Naive thymus-derived CD4-positive, alpha-beta T cell (primary cell): ENCODE measurements at regions of chr1 and their contacts with region 1.

Region 1: DNA sequence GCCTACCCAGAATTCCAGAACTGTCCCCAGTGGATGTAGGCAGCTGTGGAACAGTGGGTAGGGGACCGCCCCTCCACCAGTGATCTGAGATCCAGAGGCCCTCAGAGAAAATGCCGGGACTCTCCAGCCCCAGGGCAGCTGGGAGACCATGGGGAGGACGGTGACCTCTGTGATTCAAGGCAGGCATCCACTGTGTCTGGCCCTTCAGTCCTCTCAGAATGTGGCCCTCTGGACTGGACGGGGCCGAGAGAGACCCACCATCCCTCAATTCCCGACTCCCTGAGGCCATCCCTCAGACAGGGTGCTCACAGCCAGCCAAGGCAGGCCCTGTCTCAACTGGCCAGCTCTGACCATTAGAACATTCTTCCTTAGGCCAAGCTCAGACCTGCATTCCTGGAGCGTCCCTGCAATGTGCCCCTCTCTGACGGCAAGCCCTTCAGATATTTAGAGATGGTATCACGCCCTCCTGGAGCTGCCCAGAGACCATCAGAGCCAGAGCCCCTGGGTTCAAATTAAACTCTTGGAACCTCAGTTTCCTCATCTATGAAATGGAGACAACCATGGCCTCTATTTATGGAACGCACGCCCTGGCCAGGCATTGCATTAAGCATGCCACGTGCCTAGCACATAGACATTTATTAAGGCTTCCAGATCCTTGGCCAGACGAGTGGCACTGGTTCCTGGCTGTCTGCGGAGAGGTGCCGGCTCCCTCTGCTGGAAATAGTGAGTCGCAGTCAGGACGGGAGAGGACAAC is 9.6 kb upstream of the EPS8L3 start:
- DNase-seq: peak; percentile 34 to 79 (median 69)
- ATAC-seq: peak; percentile 87
- H3K4me3 ChIP-seq: no peak overlapping the region
- H3K4me3 Mint-ChIP-seq: no peak overlapping the region
- H3K27ac ChIP-seq: no peak overlapping the region
- H3K27ac Mint-ChIP-seq: peak overlapping the region in 1 of 9 donors; percentile 73
- H3K4me1 ChIP-seq: peaks cover 0 to 4% of the 10 kb centered on the region in 2 donors
- H3K4me1 Mint-ChIP-seq: peaks cover 0 to 21% (median 6%) of the 10 kb centered on the region in 7 donors
- H3K27me3 ChIP-seq: no peaks in the 10 kb centered on the region
- H3K27me3 Mint-ChIP-seq: peaks cover 0 to 12% (median 5%) of the 10 kb centered on the region in 5 donors

Region 2: DNA sequence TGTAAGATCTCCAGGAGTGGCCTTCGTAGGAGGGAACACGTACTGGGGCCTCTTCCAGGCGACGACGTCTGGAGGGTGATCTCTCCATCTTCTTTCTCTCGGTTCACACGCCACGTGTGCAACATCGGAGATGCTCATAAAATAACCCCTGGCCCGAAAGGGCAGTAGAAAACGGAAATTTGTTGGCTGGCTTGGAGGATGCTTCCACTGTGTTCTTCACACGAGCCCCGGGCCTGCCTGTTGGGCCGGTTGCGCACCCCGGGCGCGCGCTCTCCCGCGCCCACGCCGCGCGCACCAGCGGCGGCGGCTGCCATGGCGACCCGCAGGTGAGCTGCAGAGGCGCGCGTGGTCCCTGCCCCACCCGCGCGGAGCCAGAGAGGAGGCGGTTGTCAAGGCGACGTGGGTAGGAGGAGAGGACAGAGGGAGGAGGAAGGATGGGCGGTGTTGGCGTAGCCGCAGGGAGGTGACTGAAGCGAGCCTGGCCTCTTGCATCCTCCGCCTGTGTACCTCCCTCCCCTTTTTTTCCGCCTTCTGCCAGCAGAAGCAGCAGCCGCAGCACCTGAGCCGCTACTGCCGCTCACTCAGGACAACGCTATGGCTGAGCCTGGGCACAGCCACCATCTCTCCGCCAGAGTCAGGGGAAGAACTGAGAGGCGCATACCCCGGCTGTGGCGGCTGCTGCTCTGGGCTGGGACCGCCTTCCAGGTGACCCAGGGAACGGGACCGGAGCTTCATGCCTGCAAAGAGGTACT is 659.6 kb before region 1 on chr1 and contains the start of gene ELAPOR1:
- CTCF ChIA-PET with region 1: no interaction called
- POLR2A ChIA-PET with region 1: no interaction called
- intact Hi-C with region 1: no loop called
- DNase-seq: peak; percentile 73 to 93 (median 85)
- ATAC-seq: peak; percentile 92
- H3K4me3 ChIP-seq: peak within 1 kb of the TSS; percentile 68
- H3K4me3 Mint-ChIP-seq: peak within 1 kb of the TSS; percentile 84 to 93 (median 88)
- H3K27ac ChIP-seq: peak within 1 kb of the TSS; percentile 42
- H3K27ac Mint-ChIP-seq: peak within 1 kb of the TSS; percentile 84 to 96 (median 92)
- H3K4me1 ChIP-seq: peaks cover 16 to 21% of the 10 kb centered on the region in 2 donors
- H3K4me1 Mint-ChIP-seq: peaks cover 24 to 40% (median 30%) of the 10 kb centered on the region in 7 donors
- H3K27me3 ChIP-seq: no peaks in the 10 kb centered on the region
- H3K27me3 Mint-ChIP-seq: peaks cover 0 to 37% (median 0%) of the 10 kb centered on the region in 5 donors
- total RNA-seq, gene ELAPOR1: 4.4 to 12.3 (median 6.7) TPM

Region 3: DNA sequence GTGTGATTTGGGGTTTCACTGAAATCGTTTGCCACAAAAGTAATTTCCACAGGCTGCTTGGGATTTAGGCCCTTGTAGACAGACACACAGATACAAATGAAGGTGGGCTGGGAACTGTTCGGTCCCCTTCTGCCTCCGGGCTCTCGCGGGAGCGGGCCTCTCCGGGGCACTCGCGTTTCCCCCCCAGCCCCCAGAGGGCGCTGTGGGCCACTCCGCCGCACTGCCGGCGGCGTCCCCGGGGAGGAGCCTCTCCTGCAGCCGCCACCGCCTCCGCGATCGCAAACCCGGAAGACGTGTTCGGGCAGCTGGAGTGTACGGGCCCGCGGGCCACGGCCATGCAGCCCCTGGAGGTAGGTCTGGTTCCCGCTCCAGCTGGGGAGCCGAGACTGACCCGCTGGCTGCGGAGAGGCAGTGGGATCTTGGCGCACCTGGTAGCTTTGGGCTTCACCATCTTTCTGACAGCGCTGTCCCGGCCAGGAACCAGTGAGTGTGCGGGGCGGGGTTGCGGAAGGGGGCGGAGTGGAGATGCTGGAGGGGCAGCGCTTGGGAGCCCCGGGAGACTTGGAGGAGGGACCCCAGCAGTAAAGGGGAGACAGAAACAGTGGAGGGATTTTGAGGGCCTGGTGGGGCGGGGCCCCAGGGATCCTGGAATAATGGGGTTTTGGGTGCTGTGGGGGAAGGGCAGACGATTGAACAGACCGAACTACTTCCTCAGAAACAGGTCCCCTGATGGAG is 279.4 kb before region 1 on chr1 and contains the start of gene CYB561D1:
- CTCF ChIA-PET with region 1: no interaction called
- POLR2A ChIA-PET with region 1: no interaction called
- intact Hi-C with region 1: loop called in 1 of 2 experiments (anchors 1 kb)
- DNase-seq: peak; percentile 83 to 97 (median 91)
- ATAC-seq: peak; percentile 96
- H3K4me3 ChIP-seq: peak within 1 kb of the TSS; percentile 96
- H3K4me3 Mint-ChIP-seq: peak within 1 kb of the TSS; percentile 90 to 98 (median 94)
- H3K27ac ChIP-seq: peak within 1 kb of the TSS; percentile 72
- H3K27ac Mint-ChIP-seq: peak within 1 kb of the TSS; percentile 84 to 98 (median 92)
- H3K4me1 ChIP-seq: peaks cover 31 to 59% of the 10 kb centered on the region in 2 donors
- H3K4me1 Mint-ChIP-seq: peaks cover 40 to 59% (median 53%) of the 10 kb centered on the region in 7 donors
- H3K27me3 ChIP-seq: no peaks in the 10 kb centered on the region
- H3K27me3 Mint-ChIP-seq: no peaks in the 10 kb centered on the region
- total RNA-seq, gene CYB561D1: 19.6 to 41.5 (median 24.1) TPM

Region 4: GRCh38 chr1:109687616-109688499 is 85.5 kb before region 1 on chr1 and contains the start of gene GSTM1:
- CTCF ChIA-PET with region 1: no interaction called
- POLR2A ChIA-PET with region 1: no interaction called
- intact Hi-C with region 1: loop called in 1 of 2 experiments (anchors 2 kb)
- DNase-seq: peak in 5 of 9 donors; percentile 74 to 89 (median 82)
- ATAC-seq: no peak
- H3K4me3 ChIP-seq: no peak within 1 kb of the TSS
- H3K4me3 Mint-ChIP-seq: peak within 1 kb of the TSS in 7 of 10 donors; percentile 81 to 99 (median 90)
- H3K27ac ChIP-seq: peak within 1 kb of the TSS; percentile 70
- H3K27ac Mint-ChIP-seq: peak within 1 kb of the TSS in 6 of 9 donors; percentile 88 to 96 (median 94)
- H3K4me1 ChIP-seq: no peaks in the 10 kb centered on the region
- H3K4me1 Mint-ChIP-seq: peaks cover 0 to 27% (median 8%) of the 10 kb centered on the region in 7 donors
- H3K27me3 ChIP-seq: no peaks in the 10 kb centered on the region
- H3K27me3 Mint-ChIP-seq: no peaks in the 10 kb centered on the region
- total RNA-seq, gene GSTM1: 45.9 to 83.6 TPM in 2 of 5 experiments, not detected in the others

Region 5: DNA sequence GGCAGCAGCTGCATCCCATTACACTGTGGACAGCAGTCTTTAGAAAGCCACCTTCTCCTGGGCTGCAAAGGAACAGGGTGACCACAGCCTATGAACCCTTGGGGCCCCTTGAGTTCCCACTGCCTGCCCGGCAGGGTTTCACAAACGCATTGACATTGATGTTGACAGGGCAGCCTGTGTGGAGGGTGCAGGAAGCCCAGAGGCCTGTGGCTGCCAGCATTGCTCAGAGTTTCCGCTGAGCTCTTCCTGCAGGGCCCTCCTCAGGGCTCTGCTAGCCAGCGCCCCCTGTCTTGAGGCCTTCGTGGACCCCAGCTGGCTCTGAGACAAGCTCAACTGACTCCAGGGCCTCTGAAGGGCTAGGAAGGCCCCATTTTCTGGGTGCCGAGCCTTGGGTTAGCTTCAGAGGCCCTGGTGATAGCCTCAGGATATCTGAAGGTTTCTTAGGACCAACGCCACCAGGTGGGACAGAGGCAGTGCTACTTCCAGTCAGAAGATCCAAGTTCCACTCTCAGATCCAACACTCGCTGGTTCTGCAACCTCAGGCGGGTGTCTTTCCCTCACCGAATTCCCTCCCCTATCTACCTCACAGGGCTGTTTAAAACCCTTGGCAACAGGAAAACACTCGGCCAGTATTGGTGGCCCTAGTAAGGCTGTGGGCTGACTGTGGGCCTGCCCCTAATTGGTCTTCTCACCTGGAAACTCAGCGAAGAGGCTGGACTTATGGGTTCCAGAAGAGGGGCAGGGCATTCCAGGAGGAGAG is 17.6 kb after region 1 on chr1:
- CTCF ChIA-PET with region 1: interaction called, 64 read pairs
- POLR2A ChIA-PET with region 1: interaction called, 4 read pairs
- intact Hi-C with region 1: loop called in 1 of 2 experiments (anchors 1 kb)
- DNase-seq: peak; percentile 47 to 78 (median 67)
- ATAC-seq: peak; percentile 93
- H3K4me3 ChIP-seq: peak overlapping the region; percentile 1
- H3K4me3 Mint-ChIP-seq: peak overlapping the region in 8 of 10 donors; percentile 26 to 62 (median 40)
- H3K27ac ChIP-seq: peak overlapping the region; percentile 44
- H3K27ac Mint-ChIP-seq: peak overlapping the region in 8 of 9 donors; percentile 49 to 94 (median 84)
- H3K4me1 ChIP-seq: peaks cover 51 to 52% of the 10 kb centered on the region in 2 donors
- H3K4me1 Mint-ChIP-seq: peaks cover 38 to 88% (median 71%) of the 10 kb centered on the region in 7 donors
- H3K27me3 ChIP-seq: no peaks in the 10 kb centered on the region
- H3K27me3 Mint-ChIP-seq: no peaks in the 10 kb centered on the region

Region 6: DNA sequence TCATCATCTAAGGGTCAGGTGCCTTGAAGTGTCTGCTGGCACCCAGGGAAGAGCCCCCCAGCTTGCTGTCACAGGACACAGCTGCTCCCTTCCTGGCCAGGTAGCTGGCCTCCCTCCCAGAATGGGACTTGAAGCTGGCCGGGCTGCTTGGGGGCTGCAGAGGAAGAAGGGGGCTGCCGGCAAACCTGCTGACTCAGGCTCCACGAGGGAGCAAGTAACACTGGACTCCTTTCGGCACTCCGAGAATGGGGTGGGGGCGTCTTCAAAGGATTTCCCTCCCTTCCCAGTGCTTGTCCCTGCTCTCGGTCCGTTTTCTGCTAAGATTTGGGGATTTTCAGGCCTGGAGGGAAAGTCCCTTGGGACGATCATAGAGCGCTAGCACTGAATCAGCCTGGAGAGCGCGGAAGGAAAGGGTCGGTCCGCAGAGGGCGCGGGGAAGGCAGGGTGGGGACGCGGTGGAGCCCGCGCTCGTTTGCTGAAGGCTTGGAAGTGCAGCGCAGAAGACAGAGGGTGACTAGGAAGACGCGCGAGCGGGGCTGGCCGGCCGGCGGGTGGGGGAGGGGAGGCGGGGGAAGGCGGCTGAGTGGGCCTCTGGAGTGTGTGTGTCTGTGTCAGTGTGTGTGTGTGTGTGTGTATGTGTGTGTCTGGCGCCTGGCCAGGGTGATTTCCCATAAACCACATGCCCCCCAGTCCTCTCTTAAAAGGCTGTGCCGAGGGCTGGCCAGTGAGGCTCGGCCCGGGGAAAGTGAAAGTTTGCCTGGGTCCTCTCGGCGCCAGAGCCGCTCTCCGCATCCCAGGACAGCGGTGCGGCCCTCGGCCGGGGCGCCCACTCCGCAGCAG is 137.0 kb after region 1 on chr1 and contains the start of gene CSF1:
- CTCF ChIA-PET with region 1: interaction called, 6 read pairs
- POLR2A ChIA-PET with region 1: no interaction called
- intact Hi-C with region 1: loop called in 1 of 2 experiments (anchors 5 kb)
- DNase-seq: peak; percentile 15 to 72 (median 35)
- ATAC-seq: peak; percentile 71
- H3K4me3 ChIP-seq: peak within 1 kb of the TSS; percentile 65
- H3K4me3 Mint-ChIP-seq: peak within 1 kb of the TSS; percentile 78 to 98 (median 88)
- H3K27ac ChIP-seq: peak within 1 kb of the TSS; percentile 43
- H3K27ac Mint-ChIP-seq: peak within 1 kb of the TSS; percentile 38 to 97 (median 73)
- H3K4me1 ChIP-seq: peaks cover 36 to 43% of the 10 kb centered on the region in 2 donors
- H3K4me1 Mint-ChIP-seq: peaks cover 43 to 83% (median 64%) of the 10 kb centered on the region in 7 donors
- H3K27me3 ChIP-seq: no peaks in the 10 kb centered on the region
- H3K27me3 Mint-ChIP-seq: peaks cover 0 to 18% (median 0%) of the 10 kb centered on the region in 5 donors
- total RNA-seq, gene CSF1: 1.4 to 125 (median 5.9) TPM

Region 7: GRCh38 chr1:110011527-110012041 is 238.3 kb after region 1 on chr1:
- CTCF ChIA-PET with region 1: interaction called, 5 read pairs
- POLR2A ChIA-PET with region 1: no interaction called
- intact Hi-C with region 1: loop called in 1 of 2 experiments (anchors 1 kb)
- DNase-seq: peak in 6 of 9 donors; percentile 19 to 49 (median 38)
- ATAC-seq: peak; percentile 96
- H3K4me3 ChIP-seq: no peak overlapping the region
- H3K4me3 Mint-ChIP-seq: no peak overlapping the region
- H3K27ac ChIP-seq: no peak overlapping the region
- H3K27ac Mint-ChIP-seq: peak overlapping the region in 3 of 9 donors; percentile 17 to 73 (median 56)
- H3K4me1 ChIP-seq: no peaks in the 10 kb centered on the region
- H3K4me1 Mint-ChIP-seq: peaks cover 2 to 13% (median 4%) of the 10 kb centered on the region in 7 donors
- H3K27me3 ChIP-seq: no peaks in the 10 kb centered on the region
- H3K27me3 Mint-ChIP-seq: no peaks in the 10 kb centered on the region